ENCODE measurements at regions of chr13 and their contacts with region 1.

Region 1: GRCh38 chr13:97537110-97537509 is 103.1 kb downstream of the RAP2A start:
- DNase-seq: no peak
- H3K4me3 ChIP-seq: no peak overlapping the region
- H3K4me3 Mint-ChIP-seq: no peak overlapping the region
- H3K27ac Mint-ChIP-seq: no peak overlapping the region
- H3K4me1 ChIP-seq: no peaks in the 10 kb centered on the region
- H3K4me1 Mint-ChIP-seq: no peaks in the 10 kb centered on the region
- H3K27me3 ChIP-seq: no peaks in the 10 kb centered on the region
- H3K27me3 Mint-ChIP-seq: peaks cover 3% of the 10 kb centered on the region
- CTCF ChIP-seq: no peak

Region 2: GRCh38 chr13:98022210-98022609 is 485.1 kb after region 1 on chr13:
- CTCF ChIA-PET with region 1: no interaction called
- POLR2A ChIA-PET with region 1: interaction called, 15 read pairs
- intact Hi-C with region 1: no loop called
- DNase-seq: no peak
- H3K4me3 ChIP-seq: no peak overlapping the region
- H3K4me3 Mint-ChIP-seq: no peak overlapping the region
- H3K27ac Mint-ChIP-seq: no peak overlapping the region
- H3K4me1 ChIP-seq: no peaks in the 10 kb centered on the region
- H3K4me1 Mint-ChIP-seq: no peaks in the 10 kb centered on the region
- H3K27me3 ChIP-seq: no peaks in the 10 kb centered on the region
- H3K27me3 Mint-ChIP-seq: no peaks in the 10 kb centered on the region
- CTCF ChIP-seq: no peak

Measured in Caco-2 (cell line).